Activated naive CD4-positive, alpha-beta T cell treated with anti-CD3 and anti-CD28 coated beads, Interleukin-2, amount 10 ng/mL, durations not matched to agents 7 days and 5 days (primary cell): ENCODE measurements at regions of chr3 and their contacts with region 1.

Region 1: GRCh38 chr3:124688581-124689454 is 41.4 kb upstream of the UMPS start:
- DNase-seq: peak; percentile 84
- H3K4me3 Mint-ChIP-seq: no peak overlapping the region
- H3K27ac Mint-ChIP-seq: no peak overlapping the region
- H3K4me1 Mint-ChIP-seq: peaks cover 11% of the 10 kb centered on the region
- H3K27me3 Mint-ChIP-seq: peaks cover 29% of the 10 kb centered on the region

Region 2: GRCh38 chr3:124559881-124560574 is 128.8 kb before region 1 on chr3:
- CTCF ChIA-PET with region 1: interaction called, 46 read pairs
- DNase-seq: peak; percentile 79
- H3K4me3 Mint-ChIP-seq: no peak overlapping the region
- H3K27ac Mint-ChIP-seq: no peak overlapping the region
- H3K4me1 Mint-ChIP-seq: no peaks in the 10 kb centered on the region
- H3K27me3 Mint-ChIP-seq: peaks cover 68% of the 10 kb centered on the region

Region 3: GRCh38 chr3:124569761-124570160 is 119.1 kb before region 1 on chr3:
- CTCF ChIA-PET with region 1: interaction called, 46 read pairs
- DNase-seq: no peak
- H3K4me3 Mint-ChIP-seq: no peak overlapping the region
- H3K27ac Mint-ChIP-seq: no peak overlapping the region
- H3K4me1 Mint-ChIP-seq: peaks cover 10% of the 10 kb centered on the region
- H3K27me3 Mint-ChIP-seq: peaks cover 59% of the 10 kb centered on the region

Region 4: DNA sequence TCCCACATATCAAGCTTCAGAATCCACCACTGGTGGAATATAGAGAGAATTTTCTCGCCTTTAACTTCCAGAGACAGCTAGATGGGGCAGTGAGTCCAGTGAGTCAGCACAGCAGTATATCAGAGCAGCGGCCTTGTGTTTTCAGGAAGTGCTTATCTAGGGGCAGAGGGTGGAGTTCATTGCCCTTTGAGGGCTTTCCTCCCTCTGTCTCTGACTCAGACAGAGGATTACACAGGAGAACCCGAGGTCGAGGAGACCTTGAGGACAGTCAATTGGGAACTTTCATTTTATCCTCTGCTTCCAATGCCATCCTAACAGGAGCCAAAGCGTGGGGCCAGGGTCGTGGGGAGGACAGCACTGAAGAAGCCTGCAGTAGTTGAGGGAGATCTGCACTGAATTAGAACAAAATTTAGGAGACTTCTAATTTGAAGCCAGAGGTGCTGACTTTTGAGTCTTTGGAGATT is 68.2 kb before region 1 on chr3:
- CTCF ChIA-PET with region 1: interaction called, 40 read pairs
- DNase-seq: peak; percentile 51
- H3K4me3 Mint-ChIP-seq: peak overlapping the region; percentile 45
- H3K27ac Mint-ChIP-seq: peak overlapping the region; percentile 88
- H3K4me1 Mint-ChIP-seq: peaks cover 41% of the 10 kb centered on the region
- H3K27me3 Mint-ChIP-seq: peaks cover 4% of the 10 kb centered on the region